Right ventricle myocardium inferior (tissue), 1 donor: ENCODE measurements at regions of chr17 and their contacts with region 1.

Region 1: DNA sequence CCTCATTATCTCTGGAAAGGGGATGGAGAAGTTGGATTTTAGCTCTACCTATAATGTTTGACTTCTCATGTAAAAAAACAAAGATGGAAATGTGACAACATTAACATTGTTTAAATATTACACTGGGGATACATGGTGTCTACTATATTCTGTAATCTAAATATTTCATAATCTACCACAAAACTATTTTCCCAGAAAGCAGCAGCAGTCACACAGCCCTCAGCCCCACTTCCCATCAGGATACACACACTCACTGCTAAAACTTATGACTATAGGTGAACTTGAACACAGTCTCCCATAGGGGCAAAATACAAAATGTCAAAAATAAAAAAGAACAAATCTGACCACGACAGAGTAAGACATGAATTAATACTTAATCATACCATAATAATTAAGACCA is 95.7 kb downstream of the KANSL1 start:
- DNase-seq: no peak
- ATAC-seq: no peak

Region 2: DNA sequence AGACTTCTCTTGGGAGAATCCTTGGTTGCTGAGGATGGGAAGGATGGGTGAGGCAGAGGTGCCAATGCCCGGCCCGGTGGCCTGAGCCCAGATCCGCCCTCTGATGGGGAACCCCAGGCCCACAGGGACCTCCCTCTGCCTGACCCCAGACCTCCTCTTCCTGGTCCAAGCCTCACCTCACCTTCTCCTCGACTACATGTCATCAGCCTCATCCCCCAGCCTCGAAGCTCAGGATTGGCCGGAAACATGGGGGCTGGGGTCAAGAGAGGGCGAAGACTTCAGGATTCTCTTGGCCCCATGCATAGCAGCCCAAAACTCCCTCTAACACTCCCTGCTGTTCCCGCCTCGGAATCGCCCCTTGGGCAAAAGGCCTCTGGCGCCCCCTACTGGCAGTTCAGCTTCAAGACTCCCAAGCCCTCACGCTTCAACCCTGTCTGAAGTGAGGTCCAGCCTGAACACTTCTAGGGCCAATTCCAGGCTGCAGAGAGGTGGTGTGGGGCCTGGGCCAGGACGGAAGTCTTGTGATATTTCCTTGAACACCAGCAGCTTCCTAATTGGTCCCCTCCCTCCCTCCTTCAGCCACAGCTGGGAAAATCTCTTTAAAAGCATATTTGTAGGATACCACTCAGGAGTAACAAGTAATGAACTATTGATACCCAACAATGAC is 712.0 kb before region 1 on chr17:
- intact Hi-C with region 1: no loop called
- DNase-seq: peak; percentile 95
- ATAC-seq: peak; percentile 93

Region 3: DNA sequence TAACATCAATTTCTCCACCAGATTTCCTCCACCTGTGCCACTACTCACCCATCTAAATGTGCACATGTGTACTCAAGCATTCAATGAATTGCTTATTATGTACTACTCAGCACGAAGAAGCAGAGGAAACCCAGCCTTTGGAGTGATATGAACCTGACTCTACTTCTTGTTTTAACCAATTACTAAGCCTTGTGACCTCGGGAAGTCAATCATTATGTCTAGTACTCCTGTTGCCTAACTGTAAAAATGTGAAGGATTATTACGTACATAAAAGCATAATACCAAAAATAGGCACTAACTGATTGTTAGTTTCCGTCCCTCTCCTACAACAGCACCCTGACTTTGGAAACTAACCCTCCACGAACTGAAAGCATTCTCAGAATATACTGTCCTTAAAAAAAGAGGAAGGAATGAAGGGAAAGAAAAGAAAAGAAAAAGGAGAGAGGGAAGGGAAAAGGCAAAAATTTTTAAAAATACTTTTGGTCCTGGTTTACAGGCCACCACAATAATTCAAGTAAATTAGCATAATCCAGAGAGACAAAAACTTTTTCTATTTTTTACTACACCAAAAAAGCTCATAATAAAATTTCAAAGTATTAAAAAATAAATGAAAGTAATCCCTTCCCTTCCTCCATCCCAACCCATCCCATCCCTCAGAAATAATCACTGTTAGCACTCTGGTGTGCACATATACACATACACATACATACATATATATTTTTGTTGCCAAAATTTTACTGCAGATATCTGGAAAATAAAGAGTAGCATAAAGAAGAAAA is 42.1 kb after region 1 on chr17:
- intact Hi-C with region 1: loop called (anchors 5 kb)
- DNase-seq: no peak
- ATAC-seq: no peak